Naive thymus-derived CD4-positive, alpha-beta T cell (primary cell): ENCODE measurements at regions of chr13 and their contacts with region 1.

Region 1: DNA sequence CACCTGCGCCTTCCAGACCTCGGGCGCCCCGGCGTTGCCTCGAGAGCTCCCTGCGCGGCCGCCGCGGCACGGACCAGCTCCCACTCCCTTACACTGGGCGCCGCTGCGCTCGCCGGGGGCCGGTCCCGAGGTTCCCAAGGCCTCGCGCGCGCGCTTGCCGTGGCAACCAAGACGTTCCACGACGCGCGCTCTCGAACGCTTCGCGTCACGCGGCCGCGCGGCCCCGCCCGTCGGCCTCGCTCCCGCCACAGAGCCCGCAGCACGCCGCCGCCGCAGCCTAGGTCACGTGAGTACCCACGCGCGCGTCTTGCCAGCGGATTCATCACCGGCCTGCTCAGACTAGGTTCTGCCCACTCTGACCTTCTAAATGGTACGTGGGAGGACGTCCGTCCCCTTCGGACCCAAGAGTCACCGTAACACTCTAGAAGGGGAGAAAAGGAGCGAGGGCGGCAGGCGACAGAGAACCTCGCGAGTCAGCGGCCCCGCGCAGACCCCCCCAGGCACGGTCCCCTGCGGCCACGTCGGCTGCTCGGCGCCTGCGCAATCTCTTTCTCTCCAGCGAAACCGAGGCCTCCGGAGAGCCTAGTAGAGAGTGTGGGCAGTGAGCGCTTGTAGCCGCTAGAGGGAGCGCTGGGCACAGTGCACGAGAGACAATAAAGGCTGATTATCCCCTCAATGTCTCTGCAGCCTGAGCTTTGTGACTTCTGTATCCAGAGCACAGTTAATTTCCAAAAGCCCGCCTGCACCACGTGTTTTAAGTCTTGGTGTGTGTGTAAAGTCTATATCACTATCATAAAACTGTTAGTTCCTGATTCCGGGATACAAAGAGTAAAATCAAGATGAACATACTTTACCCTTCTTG is at the start of gene SPART:
- DNase-seq: peak; percentile 79 to 95 (median 90)
- ATAC-seq: peak; percentile 89
- H3K4me3 ChIP-seq: peak within 1 kb of the TSS; percentile 89
- H3K4me3 Mint-ChIP-seq: peak within 1 kb of the TSS; percentile 83 to 99 (median 96)
- H3K27ac ChIP-seq: peak within 1 kb of the TSS; percentile 81
- H3K27ac Mint-ChIP-seq: peak within 1 kb of the TSS; percentile 91 to 99 (median 97)
- H3K4me1 ChIP-seq: peaks cover 4 to 14% of the 10 kb centered on the region in 2 donors
- H3K4me1 Mint-ChIP-seq: peaks cover 24 to 42% (median 38%) of the 10 kb centered on the region in 7 donors
- H3K27me3 ChIP-seq: no peaks in the 10 kb centered on the region
- H3K27me3 Mint-ChIP-seq: peaks cover 0 to 5% (median 0%) of the 10 kb centered on the region in 5 donors
- total RNA-seq, gene SPART: 24.8 to 67.5 (median 26.9) TPM

Region 2: DNA sequence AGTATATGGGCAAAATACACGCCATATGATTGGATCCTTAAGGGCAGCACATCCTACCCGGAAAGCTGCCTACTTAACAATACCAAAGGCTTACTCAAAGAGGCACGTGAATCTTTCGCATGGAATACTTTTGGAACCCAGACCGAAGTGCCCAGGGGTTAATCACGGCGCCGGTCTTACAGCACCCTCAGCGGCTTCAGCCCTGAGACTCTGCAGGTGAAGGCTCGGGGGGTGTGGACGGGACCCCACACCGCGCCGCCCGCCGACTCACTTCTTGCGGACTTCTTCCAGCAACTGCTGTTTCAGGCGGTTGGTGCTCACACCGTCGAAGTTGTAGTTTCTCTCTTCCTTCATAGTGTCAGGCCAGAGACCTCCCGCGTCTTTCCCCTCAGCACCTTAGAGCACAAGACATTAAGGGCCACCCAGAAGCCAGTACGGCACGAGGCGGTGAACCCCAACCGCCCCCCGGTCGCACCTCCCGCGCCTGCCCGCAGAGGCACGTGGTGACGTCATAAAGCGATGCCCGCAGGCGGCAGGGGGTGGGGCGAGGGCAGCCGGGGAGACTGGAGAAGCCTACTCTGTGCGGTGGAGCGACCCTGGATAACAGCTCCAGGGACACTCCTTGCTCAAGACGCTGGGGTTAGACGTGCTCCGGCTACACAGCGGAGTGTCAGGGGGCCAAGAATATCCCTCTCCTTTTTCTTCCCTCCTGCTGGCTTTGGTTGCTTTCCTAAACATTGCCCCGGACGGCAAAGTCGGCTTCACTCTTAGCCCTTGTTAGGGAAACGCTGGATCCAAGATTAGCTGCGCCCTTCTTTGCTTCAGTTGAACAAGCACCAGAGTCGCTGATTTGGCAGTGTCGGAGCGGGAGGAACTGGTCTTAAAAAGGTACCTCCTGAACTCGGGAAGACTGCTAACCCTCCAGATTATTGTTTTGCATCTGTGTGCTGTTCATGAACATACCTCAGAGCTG is 48.8 kb before region 1 on chr13 and contains the start of gene CCDC169:
- CTCF ChIA-PET with region 1: no interaction called
- POLR2A ChIA-PET with region 1: no interaction called
- intact Hi-C with region 1: loop called (anchors 1 to 5 kb)
- DNase-seq: peak; percentile 42 to 76 (median 58)
- ATAC-seq: peak; percentile 91
- H3K4me3 ChIP-seq: peak within 1 kb of the TSS; percentile 55
- H3K4me3 Mint-ChIP-seq: peak within 1 kb of the TSS; percentile 81 to 92 (median 88)
- H3K27ac ChIP-seq: no peak within 1 kb of the TSS
- H3K27ac Mint-ChIP-seq: peak within 1 kb of the TSS in 5 of 9 donors; percentile 28 to 80 (median 34)
- H3K4me1 ChIP-seq: no peaks in the 10 kb centered on the region
- H3K4me1 Mint-ChIP-seq: peaks cover 4 to 18% (median 13%) of the 10 kb centered on the region in 7 donors
- H3K27me3 ChIP-seq: no peaks in the 10 kb centered on the region
- H3K27me3 Mint-ChIP-seq: peaks cover 17 to 45% (median 41%) of the 10 kb centered on the region in 5 donors
- total RNA-seq, gene CCDC169: 0.41 to 0.42 TPM in 2 of 5 experiments, not detected in the others

Region 3: GRCh38 chr13:36377826-36378468 is 31.5 kb after region 1 on chr13:
- CTCF ChIA-PET with region 1: no interaction called
- POLR2A ChIA-PET with region 1: no interaction called
- intact Hi-C with region 1: no loop called
- DNase-seq: no peak
- ATAC-seq: no peak
- H3K4me3 ChIP-seq: no peak overlapping the region
- H3K4me3 Mint-ChIP-seq: no peak overlapping the region
- H3K27ac ChIP-seq: no peak overlapping the region
- H3K27ac Mint-ChIP-seq: no peak overlapping the region
- H3K4me1 ChIP-seq: no peaks in the 10 kb centered on the region
- H3K4me1 Mint-ChIP-seq: no peaks in the 10 kb centered on the region
- H3K27me3 ChIP-seq: no peaks in the 10 kb centered on the region
- H3K27me3 Mint-ChIP-seq: peaks cover 0 to 6% (median 3%) of the 10 kb centered on the region in 5 donors

Region 4: DNA sequence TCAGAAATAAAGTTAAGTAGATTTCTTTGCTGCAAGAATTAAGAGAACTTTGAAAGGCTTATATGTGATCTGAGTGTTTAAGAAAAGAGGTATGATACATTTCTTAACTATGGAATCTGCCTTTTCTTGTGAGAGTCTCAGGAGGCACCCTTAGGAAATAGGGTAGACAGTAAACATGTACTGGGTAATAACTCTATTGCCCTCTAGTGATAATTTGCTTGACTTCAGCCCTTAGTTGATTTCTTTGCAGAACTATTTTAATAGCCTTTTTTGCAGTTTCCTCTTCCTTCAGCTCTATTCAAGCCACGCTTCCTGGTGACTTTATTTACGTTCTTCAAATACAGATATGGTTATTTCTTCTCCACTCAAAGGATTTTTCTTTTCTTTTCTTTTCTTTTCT is 48.8 kb after region 1 on chr13:
- CTCF ChIA-PET with region 1: interaction called, 3 read pairs
- POLR2A ChIA-PET with region 1: no interaction called
- intact Hi-C with region 1: loop called (anchors 1 kb)
- DNase-seq: no peak
- ATAC-seq: peak; percentile 46
- H3K4me3 ChIP-seq: no peak overlapping the region
- H3K4me3 Mint-ChIP-seq: no peak overlapping the region
- H3K27ac ChIP-seq: no peak overlapping the region
- H3K27ac Mint-ChIP-seq: no peak overlapping the region
- H3K4me1 ChIP-seq: no peaks in the 10 kb centered on the region
- H3K4me1 Mint-ChIP-seq: peaks cover 0 to 2% (median 0%) of the 10 kb centered on the region in 7 donors
- H3K27me3 ChIP-seq: no peaks in the 10 kb centered on the region
- H3K27me3 Mint-ChIP-seq: peaks cover 0 to 24% (median 5%) of the 10 kb centered on the region in 5 donors

Region 5: GRCh38 chr13:36736119-36736726 is 389.8 kb after region 1 on chr13:
- CTCF ChIA-PET with region 1: interaction called, 17 read pairs
- POLR2A ChIA-PET with region 1: no interaction called
- intact Hi-C with region 1: loop called (anchors 1 kb)
- DNase-seq: peak in 7 of 9 donors; percentile 3 to 43 (median 22)
- ATAC-seq: no peak
- H3K4me3 ChIP-seq: no peak overlapping the region
- H3K4me3 Mint-ChIP-seq: no peak overlapping the region
- H3K27ac ChIP-seq: no peak overlapping the region
- H3K27ac Mint-ChIP-seq: no peak overlapping the region
- H3K4me1 ChIP-seq: no peaks in the 10 kb centered on the region
- H3K4me1 Mint-ChIP-seq: no peaks in the 10 kb centered on the region
- H3K27me3 ChIP-seq: no peaks in the 10 kb centered on the region
- H3K27me3 Mint-ChIP-seq: peaks cover 0 to 4% (median 0%) of the 10 kb centered on the region in 5 donors

Region 6: GRCh38 chr13:36981156-36981743 is 634.8 kb after region 1 on chr13:
- CTCF ChIA-PET with region 1: no interaction called
- POLR2A ChIA-PET with region 1: no interaction called
- intact Hi-C with region 1: loop called in 1 of 2 experiments (anchors 5 kb)
- DNase-seq: peak in 3 of 9 donors; percentile 2 to 18 (median 5)
- ATAC-seq: peak; percentile 49
- H3K4me3 ChIP-seq: no peak overlapping the region
- H3K4me3 Mint-ChIP-seq: no peak overlapping the region
- H3K27ac ChIP-seq: no peak overlapping the region
- H3K27ac Mint-ChIP-seq: peak overlapping the region in 1 of 9 donors; percentile 10
- H3K4me1 ChIP-seq: no peaks in the 10 kb centered on the region
- H3K4me1 Mint-ChIP-seq: peaks cover 0 to 15% (median 2%) of the 10 kb centered on the region in 7 donors
- H3K27me3 ChIP-seq: no peaks in the 10 kb centered on the region
- H3K27me3 Mint-ChIP-seq: no peaks in the 10 kb centered on the region

Region 7: DNA sequence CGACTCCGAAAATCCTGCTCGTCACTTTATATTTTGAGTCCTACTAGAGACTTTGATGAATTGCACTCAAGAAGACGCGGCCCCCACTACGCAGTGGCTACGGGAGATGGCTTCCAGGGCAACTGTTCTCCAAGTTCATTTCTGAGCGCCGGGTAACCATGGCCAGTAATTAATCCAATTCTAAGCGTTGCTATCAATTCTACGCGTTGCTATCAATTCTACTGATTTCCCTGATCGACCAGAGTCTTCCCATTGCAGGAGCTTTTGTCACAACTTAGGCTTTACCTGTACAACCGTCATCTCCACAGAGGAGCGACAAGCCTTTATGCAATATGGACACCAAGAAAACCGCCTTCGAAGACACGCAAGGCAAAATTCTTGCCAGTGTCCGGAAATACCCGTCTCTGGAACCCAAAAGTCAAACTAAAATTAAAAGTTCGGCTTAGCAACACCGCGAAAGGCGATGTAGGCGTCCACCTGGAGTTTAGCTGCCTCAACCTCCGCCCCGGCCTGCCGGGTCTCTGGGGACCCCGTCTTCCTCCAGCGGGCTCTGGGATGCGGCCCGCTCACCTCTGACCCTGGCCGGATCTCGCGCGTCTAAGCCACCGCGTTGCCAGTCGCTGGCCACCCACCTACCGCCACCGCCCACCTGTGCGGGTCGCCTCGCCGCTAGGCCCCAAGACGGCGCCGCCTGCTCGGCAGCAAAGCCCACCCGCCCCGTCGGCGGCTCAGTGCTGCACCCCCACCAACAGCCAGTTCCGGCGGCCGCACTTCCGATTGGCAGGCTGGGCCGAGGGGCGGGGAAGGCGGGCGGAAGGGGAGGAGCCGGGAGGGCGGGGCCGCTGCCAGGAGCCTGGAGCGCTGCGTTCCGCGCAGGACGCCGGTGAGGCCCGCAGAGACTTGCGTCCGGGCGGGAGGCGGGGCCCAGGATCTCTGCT is 712.7 kb after region 1 on chr13 and contains the start of gene SUPT20H:
- CTCF ChIA-PET with region 1: no interaction called
- POLR2A ChIA-PET with region 1: no interaction called
- intact Hi-C with region 1: loop called (anchors 1 to 10 kb)
- DNase-seq: peak; percentile 85 to 94 (median 91)
- ATAC-seq: peak; percentile 98
- H3K4me3 ChIP-seq: peak within 1 kb of the TSS; percentile 77
- H3K4me3 Mint-ChIP-seq: peak within 1 kb of the TSS; percentile 87 to 99 (median 94)
- H3K27ac ChIP-seq: peak within 1 kb of the TSS; percentile 93
- H3K27ac Mint-ChIP-seq: peak within 1 kb of the TSS; percentile 93 to 99 (median 98)
- H3K4me1 ChIP-seq: peaks cover 13 to 15% of the 10 kb centered on the region in 2 donors
- H3K4me1 Mint-ChIP-seq: peaks cover 13 to 59% (median 50%) of the 10 kb centered on the region in 7 donors
- H3K27me3 ChIP-seq: no peaks in the 10 kb centered on the region
- H3K27me3 Mint-ChIP-seq: peaks cover 0 to 10% (median 0%) of the 10 kb centered on the region in 5 donors
- total RNA-seq, gene SUPT20H: 70.5 to 106 (median 86.1) TPM